Naive thymus-derived CD8-positive, alpha-beta T cell (primary cell): ENCODE measurements at regions of chr7 and their contacts with region 1.

Region 1: GRCh38 chr7:129918922-129919321 is 33.8 kb downstream of the UBE2H start:
- DNase-seq: no peak
- ATAC-seq: no peak
- H3K4me3 Mint-ChIP-seq: peak overlapping the region in 1 of 10 donors; percentile 14
- H3K27ac Mint-ChIP-seq: peak overlapping the region in 2 of 10 donors; percentile 41 to 73
- H3K4me1 Mint-ChIP-seq: peaks cover 33 to 73% (median 68%) of the 10 kb centered on the region in 4 donors
- H3K27me3 Mint-ChIP-seq: no peaks in the 10 kb centered on the region

Region 2: DNA sequence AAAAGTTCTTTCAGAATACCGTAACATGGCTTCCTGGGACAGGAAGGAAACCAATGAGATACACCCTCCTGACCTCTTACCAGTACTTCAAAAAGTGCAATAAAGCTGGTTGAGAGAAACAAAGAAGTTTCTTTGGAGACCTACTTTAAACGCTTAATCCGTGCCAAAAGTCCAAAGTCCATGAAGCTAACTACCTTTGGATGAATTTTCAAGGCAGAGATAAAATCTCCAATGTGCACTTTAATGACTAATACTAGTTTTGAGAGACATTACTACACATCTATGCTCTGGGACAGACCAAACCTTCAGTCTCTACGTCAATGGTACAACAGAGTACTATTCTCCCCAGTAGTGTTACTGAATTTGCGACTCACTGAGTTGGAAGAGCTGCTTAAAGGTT is 12.2 kb before region 1 on chr7:
- POLR2A ChIA-PET with region 1: interaction called, 17 read pairs
- DNase-seq: peak in 3 of 10 donors; percentile 36 to 57 (median 56)
- ATAC-seq: peak; percentile 74 to 82
- H3K4me3 Mint-ChIP-seq: peak overlapping the region; percentile 46 to 83 (median 70)
- H3K27ac Mint-ChIP-seq: peak overlapping the region; percentile 75 to 97 (median 94)
- H3K4me1 Mint-ChIP-seq: peaks cover 55 to 98% (median 95%) of the 10 kb centered on the region in 4 donors
- H3K27me3 Mint-ChIP-seq: no peaks in the 10 kb centered on the region